ENCODE measurements at regions of chr12 and their contacts with region 1.

Region 1: DNA sequence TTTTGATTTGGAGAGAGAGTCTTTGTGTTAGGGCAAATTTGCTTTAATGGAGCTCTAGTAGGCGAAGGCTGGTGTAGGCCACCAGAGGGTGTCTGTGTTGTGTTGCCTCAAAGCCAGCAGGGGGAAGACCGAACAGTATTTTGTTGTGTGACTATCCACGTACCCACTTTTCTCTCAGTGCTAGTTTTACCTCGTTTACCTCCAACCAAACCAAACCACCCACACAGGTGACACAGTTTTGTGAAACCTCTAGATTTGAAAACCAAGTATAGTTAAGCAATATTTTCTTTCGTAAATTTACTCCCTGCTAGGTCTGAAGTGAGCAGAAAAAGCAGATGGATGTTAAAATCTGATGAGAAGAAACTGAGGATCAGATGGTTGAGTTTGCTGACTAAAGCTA is 36.3 kb upstream of the NPFF start:
- DNase-seq: peak; percentile 41 to 83 (median 70)
- H3K4me3 ChIP-seq: peak overlapping the region in 4 of 59 donors; percentile 3 to 31 (median 8)
- H3K27ac ChIP-seq: peak overlapping the region; percentile 52 to 93 (median 87)
- H3K27me3 ChIP-seq: no peaks in the 10 kb centered on the region
- CTCF ChIP-seq: peak; percentile 66 to 98 (median 92)

Region 2: GRCh38 chr12:53474819-53475218 is 68.7 kb before region 1 on chr12:
- intact Hi-C with region 1: no loop called
- DNase-seq: peak in 1 of 10 donors; percentile 37
- H3K4me3 ChIP-seq: peak overlapping the region in 10 of 59 donors; percentile 4 to 30 (median 20)
- H3K27ac ChIP-seq: peak overlapping the region in 33 of 59 donors; percentile 1 to 77 (median 46)
- H3K27me3 ChIP-seq: no peaks in the 10 kb centered on the region
- CTCF ChIP-seq: no peak

Region 3: DNA sequence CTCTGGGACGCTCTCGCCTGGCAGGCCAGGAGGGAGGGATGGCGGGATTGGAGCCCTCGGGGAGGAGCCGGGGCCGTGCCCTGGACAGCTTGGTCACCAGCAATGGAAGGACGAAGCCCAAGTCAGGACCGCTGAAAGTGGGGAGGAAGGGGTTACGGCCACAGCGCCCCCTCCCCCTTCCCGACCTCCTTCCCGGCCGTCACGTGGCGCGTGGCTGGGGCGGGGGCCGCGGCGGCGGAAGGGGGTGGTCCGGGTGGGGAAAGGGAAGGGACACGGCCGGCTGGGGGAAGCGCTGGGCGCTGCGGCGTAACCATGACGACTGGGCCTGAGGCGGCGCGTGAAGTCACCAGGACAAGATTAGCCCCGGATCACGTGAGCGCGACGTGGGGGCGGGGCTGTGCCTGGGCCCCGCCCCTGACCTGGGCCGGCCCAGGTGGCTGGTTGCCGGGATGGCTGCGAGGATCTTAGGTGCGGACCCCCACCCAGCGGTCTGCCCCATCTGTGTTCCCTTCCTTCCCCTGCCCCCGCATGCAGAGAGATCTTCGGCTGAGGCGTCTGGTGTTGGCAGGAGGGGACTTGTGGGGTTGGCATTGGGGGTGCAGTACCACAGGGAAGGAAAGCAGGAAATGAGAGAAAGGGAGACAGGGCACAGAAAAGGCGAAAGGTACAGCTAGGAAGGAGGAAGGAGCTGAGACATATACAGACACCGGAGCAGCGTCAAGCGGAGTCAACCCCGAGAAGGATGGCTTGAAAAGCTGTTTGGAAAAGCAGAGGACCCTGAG is 50.5 kb before region 1 on chr12:
- intact Hi-C with region 1: no loop called
- DNase-seq: peak; percentile 93 to 98 (median 96)
- H3K4me3 ChIP-seq: peak overlapping the region; percentile 51 to 80 (median 67)
- H3K27ac ChIP-seq: peak overlapping the region; percentile 48 to 96 (median 90)
- H3K27me3 ChIP-seq: no peaks in the 10 kb centered on the region
- CTCF ChIP-seq: peak in 27 of 56 donors; percentile 11 to 50 (median 32)

Region 4: GRCh38 chr12:53561590-53561953 is 18.0 kb after region 1 on chr12:
- intact Hi-C with region 1: no loop called
- DNase-seq: no peak
- H3K4me3 ChIP-seq: no peak overlapping the region
- H3K27ac ChIP-seq: peak overlapping the region in 49 of 59 donors; percentile 1 to 76 (median 40)
- H3K27me3 ChIP-seq: no peaks in the 10 kb centered on the region
- CTCF ChIP-seq: peak in 1 of 56 donors; percentile 6

Region 5: DNA sequence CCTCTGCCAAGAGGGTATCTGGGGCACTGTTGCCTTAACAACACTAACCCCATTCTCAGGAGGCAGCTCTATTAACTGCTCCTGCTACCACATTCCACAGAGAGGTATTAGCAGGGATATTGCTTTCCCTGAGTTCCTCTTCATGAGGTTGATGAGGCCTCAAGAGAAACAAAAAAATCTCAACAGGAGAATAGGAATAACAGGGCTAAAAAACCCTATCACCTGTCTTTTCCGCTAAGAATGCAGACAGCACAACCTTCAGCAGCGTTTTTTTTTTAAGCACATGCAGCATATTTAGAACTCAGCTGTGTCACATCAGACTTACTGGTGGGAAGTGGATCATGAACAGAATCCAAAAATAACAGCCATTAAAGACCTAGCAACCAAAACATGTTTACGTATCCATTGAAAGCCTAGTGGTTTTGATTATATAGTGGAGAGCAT is 53.4 kb after region 1 on chr12:
- intact Hi-C with region 1: loop called (anchors 5 kb)
- DNase-seq: no peak
- H3K4me3 ChIP-seq: peak overlapping the region in 2 of 59 donors; percentile 2 to 14
- H3K27ac ChIP-seq: peak overlapping the region in 57 of 59 donors; percentile 4 to 98 (median 90)
- H3K27me3 ChIP-seq: no peaks in the 10 kb centered on the region
- CTCF ChIP-seq: no peak

Region 6: DNA sequence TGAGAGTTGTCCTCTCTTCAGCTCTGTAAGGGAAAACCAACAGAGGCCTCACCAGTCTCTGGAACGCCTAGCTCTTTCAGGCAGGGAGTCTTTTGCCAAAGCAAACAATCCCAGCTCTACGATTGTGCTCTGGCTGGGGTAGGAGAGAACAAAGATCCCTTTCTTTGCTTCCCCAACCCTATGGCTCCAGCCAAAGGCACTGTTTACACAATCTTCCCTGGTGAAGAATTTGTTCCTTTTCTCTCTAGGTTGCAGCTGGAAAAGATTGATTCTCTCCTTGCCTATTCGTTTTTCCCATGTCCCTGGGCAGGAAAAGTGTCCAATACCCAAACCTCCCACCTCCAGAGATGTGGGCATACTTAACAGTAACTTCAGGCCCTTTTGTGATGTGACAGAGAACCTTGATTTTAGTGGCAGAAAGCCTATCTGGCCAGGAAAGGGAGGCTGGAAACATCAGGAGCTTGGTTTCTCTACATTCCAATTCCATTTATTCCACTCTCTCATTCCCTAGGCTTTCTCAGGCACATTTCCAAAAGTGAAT is 115.5 kb after region 1 on chr12:
- intact Hi-C with region 1: loop called in 1 of 2 experiments (anchors 5 kb)
- DNase-seq: peak in 9 of 10 donors; percentile 14 to 80 (median 67)
- H3K4me3 ChIP-seq: peak overlapping the region in 43 of 59 donors; percentile 0 to 52 (median 17)
- H3K27ac ChIP-seq: peak overlapping the region; percentile 87 to 100 (median 98)
- H3K27me3 ChIP-seq: no peaks in the 10 kb centered on the region
- CTCF ChIP-seq: peak in 23 of 56 donors; percentile 9 to 47 (median 21)

Region 7: GRCh38 chr12:53746592-53747092 is 203.1 kb after region 1 on chr12:
- intact Hi-C with region 1: loop called (anchors 5 to 10 kb)
- DNase-seq: peak; percentile 87 to 96 (median 93)
- H3K4me3 ChIP-seq: peak overlapping the region in 4 of 59 donors; percentile 5 to 28 (median 11)
- H3K27ac ChIP-seq: peak overlapping the region in 30 of 59 donors; percentile 10 to 80 (median 51)
- H3K27me3 ChIP-seq: peaks cover 0 to 23% (median 0%) of the 10 kb centered on the region in 45 donors
- CTCF ChIP-seq: peak; percentile 99 to 100 (median 100)